CD4-positive, alpha-beta T cell (primary cell): ENCODE measurements at regions of chr2 and their contacts with region 1.

Region 1: GRCh38 chr2:234550511-234551107 is 53.7 kb upstream of the ARL4C start:
- DNase-seq: peak; percentile 25 to 80 (median 42)
- ATAC-seq: peak; percentile 82
- H3K4me3 ChIP-seq: no peak overlapping the region
- H3K4me3 Mint-ChIP-seq: no peak overlapping the region
- H3K27ac ChIP-seq: no peak overlapping the region
- H3K27ac Mint-ChIP-seq: no peak overlapping the region
- H3K4me1 ChIP-seq: no peaks in the 10 kb centered on the region
- H3K4me1 Mint-ChIP-seq: peaks cover 4% of the 10 kb centered on the region
- H3K27me3 ChIP-seq: peaks cover 0 to 8% of the 10 kb centered on the region in 2 experiments
- H3K27me3 Mint-ChIP-seq: peaks cover 40% of the 10 kb centered on the region
- CTCF ChIP-seq: peak; percentile 95

Region 2: DNA sequence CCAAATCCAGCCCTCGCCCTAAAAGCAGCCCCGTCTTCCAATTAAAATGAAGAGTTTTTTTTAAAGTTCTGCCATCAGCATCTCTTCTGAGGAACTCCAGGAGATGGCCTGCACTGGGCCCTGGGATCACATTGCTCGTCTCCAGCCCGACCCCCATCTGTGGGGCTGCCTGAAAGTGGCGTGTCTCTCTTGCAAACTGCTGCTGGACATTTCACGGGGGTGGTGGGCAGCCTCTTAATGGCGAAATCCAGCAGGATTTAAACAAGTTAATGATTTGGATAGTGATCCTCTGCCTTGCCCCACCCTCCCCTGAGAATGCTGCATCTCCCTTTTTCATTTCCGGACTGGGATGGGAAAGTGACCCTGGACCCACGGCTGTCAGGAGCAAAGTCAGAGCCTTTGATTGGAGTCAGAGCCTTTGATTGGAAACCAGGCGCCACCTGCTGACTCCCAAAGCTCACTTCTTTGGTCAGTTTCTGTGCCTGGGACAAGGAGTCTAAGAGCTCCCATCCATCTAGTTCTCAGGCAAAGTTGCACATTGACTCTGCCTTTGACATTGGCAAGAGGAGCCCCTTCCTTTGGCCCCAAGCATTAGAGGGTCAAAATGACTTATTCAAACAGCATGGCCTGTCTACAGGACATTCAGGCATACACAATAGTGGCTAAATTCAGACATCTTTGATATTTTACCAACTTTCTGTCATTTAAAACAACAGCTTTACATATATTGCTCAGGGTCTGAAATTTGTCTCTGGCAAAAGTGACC is 556.4 kb after region 1 on chr2:
- CTCF ChIA-PET with region 1: no interaction called
- POLR2A ChIA-PET with region 1: no interaction called
- intact Hi-C with region 1: loop called in 1 of 2 experiments (anchors 2 kb)
- DNase-seq: peak in 4 of 14 experiments; percentile 11 to 29 (median 20)
- ATAC-seq: no peak
- H3K4me3 ChIP-seq: no peak overlapping the region
- H3K4me3 Mint-ChIP-seq: no peak overlapping the region
- H3K27ac ChIP-seq: no peak overlapping the region
- H3K27ac Mint-ChIP-seq: no peak overlapping the region
- H3K4me1 ChIP-seq: no peaks in the 10 kb centered on the region
- H3K4me1 Mint-ChIP-seq: no peaks in the 10 kb centered on the region
- H3K27me3 ChIP-seq: peaks cover 0 to 2% of the 10 kb centered on the region in 2 experiments
- H3K27me3 Mint-ChIP-seq: peaks cover 13% of the 10 kb centered on the region
- CTCF ChIP-seq: no peak

Region 3: DNA sequence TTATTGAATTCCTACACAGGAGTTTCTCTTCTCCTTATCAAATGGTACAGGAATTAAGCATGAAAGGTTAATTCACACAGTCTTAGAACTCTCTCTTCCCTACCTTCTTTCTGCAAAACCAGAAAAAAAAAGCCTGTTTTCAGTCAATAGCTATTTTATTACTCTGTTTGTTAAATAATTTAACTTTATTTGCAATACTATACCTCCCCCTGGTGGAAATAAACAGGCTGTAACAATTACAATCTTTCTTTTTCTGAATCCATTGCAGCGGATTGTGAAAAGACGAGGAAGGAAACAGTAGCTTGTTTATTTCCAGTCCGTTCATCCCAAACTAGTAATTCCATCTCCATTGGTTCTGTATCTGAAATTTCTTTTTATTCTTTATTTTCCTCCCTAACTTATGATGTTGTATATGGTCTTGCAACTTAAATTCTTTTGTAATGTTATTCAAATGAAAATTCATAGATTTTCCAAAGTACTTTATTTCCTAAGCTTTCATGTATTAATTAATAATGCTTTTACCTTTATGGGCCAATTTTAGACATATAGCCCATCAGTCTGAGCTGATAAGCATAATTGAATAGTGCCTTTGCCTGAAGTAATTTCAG is 566.4 kb after region 1 on chr2:
- CTCF ChIA-PET with region 1: no interaction called
- POLR2A ChIA-PET with region 1: no interaction called
- intact Hi-C with region 1: loop called (anchors 1 to 2 kb)
- DNase-seq: peak in 3 of 14 experiments; percentile 22 to 34 (median 34)
- ATAC-seq: no peak
- H3K4me3 ChIP-seq: no peak overlapping the region
- H3K4me3 Mint-ChIP-seq: no peak overlapping the region
- H3K27ac ChIP-seq: no peak overlapping the region
- H3K27ac Mint-ChIP-seq: no peak overlapping the region
- H3K4me1 ChIP-seq: no peaks in the 10 kb centered on the region
- H3K4me1 Mint-ChIP-seq: no peaks in the 10 kb centered on the region
- H3K27me3 ChIP-seq: peaks cover 0 to 5% of the 10 kb centered on the region in 2 experiments
- H3K27me3 Mint-ChIP-seq: peaks cover 32% of the 10 kb centered on the region
- CTCF ChIP-seq: peak; percentile 58

Region 4: DNA sequence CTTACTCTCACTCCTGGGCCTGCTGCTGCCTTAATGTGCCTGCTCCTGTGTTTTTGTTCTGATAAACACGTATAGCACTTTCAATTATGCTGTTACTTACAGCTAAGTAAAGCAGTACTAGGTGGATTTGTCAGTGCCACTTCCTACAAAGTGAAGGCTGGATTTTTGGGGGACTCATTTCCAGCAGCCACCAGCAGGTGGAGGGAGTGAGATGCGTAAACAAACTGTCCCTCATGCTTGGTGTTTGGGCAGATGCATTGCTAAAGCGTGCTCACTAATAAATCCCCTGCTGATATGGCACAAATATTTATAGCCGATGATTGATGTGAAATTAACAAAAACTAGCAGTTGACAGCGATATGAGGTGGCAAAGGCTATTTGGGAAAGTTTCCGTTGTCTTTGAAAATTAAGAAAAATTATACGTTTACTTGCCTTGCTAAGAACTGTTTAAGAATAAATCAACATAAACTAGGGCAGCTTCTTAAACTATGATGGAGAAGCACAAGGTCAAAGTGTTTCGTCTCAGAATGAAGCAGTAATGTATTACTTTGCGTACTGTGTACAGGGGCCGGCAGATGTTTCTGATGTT is 1044.9 kb after region 1 on chr2:
- CTCF ChIA-PET with region 1: no interaction called
- POLR2A ChIA-PET with region 1: no interaction called
- intact Hi-C with region 1: loop called (anchors 2 kb)
- DNase-seq: peak in 8 of 14 experiments; percentile 7 to 49 (median 15)
- ATAC-seq: no peak
- H3K4me3 ChIP-seq: no peak overlapping the region
- H3K4me3 Mint-ChIP-seq: no peak overlapping the region
- H3K27ac ChIP-seq: no peak overlapping the region
- H3K27ac Mint-ChIP-seq: no peak overlapping the region
- H3K4me1 ChIP-seq: no peaks in the 10 kb centered on the region
- H3K4me1 Mint-ChIP-seq: no peaks in the 10 kb centered on the region
- H3K27me3 ChIP-seq: peaks cover 0 to 2% of the 10 kb centered on the region in 2 experiments
- H3K27me3 Mint-ChIP-seq: peaks cover 13% of the 10 kb centered on the region
- CTCF ChIP-seq: peak; percentile 31

Region 5: GRCh38 chr2:235746257-235747084 is 1195.9 kb after region 1 on chr2:
- CTCF ChIA-PET with region 1: no interaction called
- POLR2A ChIA-PET with region 1: no interaction called
- intact Hi-C with region 1: loop called in 1 of 2 experiments (anchors 5 kb)
- DNase-seq: peak in 10 of 14 experiments; percentile 15 to 74 (median 27)
- ATAC-seq: peak; percentile 49
- H3K4me3 ChIP-seq: no peak overlapping the region
- H3K4me3 Mint-ChIP-seq: no peak overlapping the region
- H3K27ac ChIP-seq: no peak overlapping the region
- H3K27ac Mint-ChIP-seq: no peak overlapping the region
- H3K4me1 ChIP-seq: peaks cover 4% of the 10 kb centered on the region
- H3K4me1 Mint-ChIP-seq: no peaks in the 10 kb centered on the region
- H3K27me3 ChIP-seq: peaks cover 2 to 3% of the 10 kb centered on the region in 2 experiments
- H3K27me3 Mint-ChIP-seq: peaks cover 25% of the 10 kb centered on the region
- CTCF ChIP-seq: peak; percentile 64